ENCODE measurements at regions of chr4 and their contacts with region 1.

Region 1: GRCh38 chr4:178275671-178276360 is 833.6 kb upstream of the AGA start:
- DNase-seq: no peak
- H3K4me3 Mint-ChIP-seq: no peak overlapping the region
- H3K27ac Mint-ChIP-seq: no peak overlapping the region
- H3K4me1 Mint-ChIP-seq: no peaks in the 10 kb centered on the region
- H3K27me3 Mint-ChIP-seq: no peaks in the 10 kb centered on the region

Region 2: DNA sequence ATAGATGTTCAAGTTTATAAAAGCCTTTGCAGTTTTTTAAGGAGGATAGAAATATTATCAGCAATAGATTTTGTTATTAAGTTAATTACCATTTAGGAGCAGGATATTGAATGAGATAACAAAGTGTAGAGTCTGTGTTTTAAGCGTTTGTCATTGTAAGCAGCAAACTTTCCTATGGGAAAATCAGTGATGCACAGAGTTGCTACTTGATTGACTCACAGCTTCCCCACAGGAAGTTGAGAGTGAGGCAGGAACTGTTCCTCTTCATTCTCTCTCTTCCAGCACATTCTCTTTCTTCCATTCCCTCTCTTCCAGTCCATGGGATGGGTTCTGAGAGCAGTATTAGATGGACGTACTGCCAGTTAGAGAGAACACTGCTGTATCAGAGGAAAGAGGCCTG is 34.1 kb after region 1 on chr4:
- CTCF ChIA-PET with region 1: no interaction called
- intact Hi-C with region 1: loop called (anchors 1 kb)
- DNase-seq: no peak
- H3K4me3 Mint-ChIP-seq: no peak overlapping the region
- H3K27ac Mint-ChIP-seq: no peak overlapping the region
- H3K4me1 Mint-ChIP-seq: no peaks in the 10 kb centered on the region
- H3K27me3 Mint-ChIP-seq: no peaks in the 10 kb centered on the region

Measured in activated naive CD4-positive, alpha-beta T cell treated with anti-CD3 and anti-CD28 coated beads for 36 hours (primary cell).